Aorta (tissue), 5 donors: ENCODE measurements at regions of chr5 and their contacts with region 1.

Region 1: DNA sequence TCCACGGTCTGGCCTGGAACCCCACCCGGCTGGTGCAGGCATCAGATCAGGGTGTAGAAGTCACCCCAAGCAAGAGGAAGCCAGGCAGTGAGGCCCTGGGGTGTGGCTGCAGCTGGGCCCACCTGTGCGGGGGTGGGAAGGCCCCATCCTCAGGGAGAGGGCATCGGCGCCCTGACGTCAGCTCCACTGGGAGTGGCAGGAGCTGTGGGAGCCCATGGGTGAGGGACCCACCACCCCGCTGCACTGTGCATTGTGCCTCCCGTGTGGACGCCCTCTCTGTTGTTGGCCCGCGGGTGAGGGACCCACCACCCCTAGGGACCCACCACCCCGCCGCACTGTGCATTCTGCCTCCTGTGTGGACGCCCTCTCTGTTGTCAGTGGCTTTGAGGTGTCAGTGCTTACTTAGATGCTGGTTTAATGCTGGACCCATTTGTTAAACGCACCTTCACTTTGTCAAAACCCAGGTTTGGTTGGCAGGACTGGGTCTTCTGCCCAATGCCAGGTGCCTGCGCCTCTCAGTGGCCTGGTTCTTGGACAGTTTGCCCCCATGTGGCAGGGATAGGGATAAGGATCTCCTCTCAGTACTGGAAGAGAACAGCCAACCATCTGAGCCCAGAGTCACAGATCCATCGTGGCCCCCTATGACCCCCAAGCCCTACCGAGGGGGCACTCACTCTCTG is 6.9 kb upstream of the EXOC3 start:
- DNase-seq: peak; percentile 36 to 67
- ATAC-seq: no peak
- H3K4me3 ChIP-seq: no peak overlapping the region
- H3K27ac ChIP-seq: no peak overlapping the region
- H3K4me1 ChIP-seq: no peaks in the 10 kb centered on the region
- H3K27me3 ChIP-seq: no peaks in the 10 kb centered on the region

Region 2: DNA sequence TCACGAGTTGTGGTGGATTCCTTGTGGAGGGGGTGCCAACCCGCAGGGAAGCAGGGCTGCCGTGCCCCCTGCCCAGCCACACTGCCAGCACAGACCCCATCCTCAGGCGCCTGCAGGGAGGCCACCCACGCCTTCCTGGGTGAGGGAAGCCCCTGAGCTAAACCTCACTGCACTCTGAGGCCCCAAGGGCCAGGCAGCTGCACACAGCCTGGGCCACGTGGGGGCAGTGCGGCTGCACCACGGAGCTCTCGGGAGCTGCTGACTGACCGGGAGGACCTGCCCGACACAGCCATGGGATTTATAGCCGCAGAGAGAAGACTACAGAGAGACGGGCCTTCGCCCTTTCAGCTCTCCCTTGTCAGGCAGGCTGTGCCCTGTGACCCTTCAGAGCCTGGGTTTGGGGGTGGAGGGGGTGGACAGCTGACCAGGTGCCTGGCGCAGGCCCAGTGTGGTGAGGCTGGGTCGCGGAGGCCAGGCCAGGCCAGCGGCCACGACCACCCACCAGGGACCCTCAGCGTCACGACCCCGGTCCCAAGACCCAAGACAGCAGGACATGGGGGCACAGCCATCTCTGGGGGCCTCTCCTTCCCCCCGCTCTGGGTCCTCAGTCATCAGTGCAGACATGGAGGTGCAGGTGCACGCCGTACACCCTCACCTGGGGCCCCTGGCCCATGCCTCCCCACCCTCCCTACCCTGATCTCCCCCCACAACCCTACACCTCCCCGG is 118.9 kb before region 1 on chr5:
- intact Hi-C with region 1: loop called in 1 of 2 experiments (anchors 5 kb)
- DNase-seq: peak in 1 of 2 donors; percentile 61
- ATAC-seq: peak; percentile 6
- H3K4me3 ChIP-seq: no peak overlapping the region
- H3K27ac ChIP-seq: no peak overlapping the region
- H3K4me1 ChIP-seq: no peaks in the 10 kb centered on the region
- H3K27me3 ChIP-seq: no peaks in the 10 kb centered on the region

Region 3: DNA sequence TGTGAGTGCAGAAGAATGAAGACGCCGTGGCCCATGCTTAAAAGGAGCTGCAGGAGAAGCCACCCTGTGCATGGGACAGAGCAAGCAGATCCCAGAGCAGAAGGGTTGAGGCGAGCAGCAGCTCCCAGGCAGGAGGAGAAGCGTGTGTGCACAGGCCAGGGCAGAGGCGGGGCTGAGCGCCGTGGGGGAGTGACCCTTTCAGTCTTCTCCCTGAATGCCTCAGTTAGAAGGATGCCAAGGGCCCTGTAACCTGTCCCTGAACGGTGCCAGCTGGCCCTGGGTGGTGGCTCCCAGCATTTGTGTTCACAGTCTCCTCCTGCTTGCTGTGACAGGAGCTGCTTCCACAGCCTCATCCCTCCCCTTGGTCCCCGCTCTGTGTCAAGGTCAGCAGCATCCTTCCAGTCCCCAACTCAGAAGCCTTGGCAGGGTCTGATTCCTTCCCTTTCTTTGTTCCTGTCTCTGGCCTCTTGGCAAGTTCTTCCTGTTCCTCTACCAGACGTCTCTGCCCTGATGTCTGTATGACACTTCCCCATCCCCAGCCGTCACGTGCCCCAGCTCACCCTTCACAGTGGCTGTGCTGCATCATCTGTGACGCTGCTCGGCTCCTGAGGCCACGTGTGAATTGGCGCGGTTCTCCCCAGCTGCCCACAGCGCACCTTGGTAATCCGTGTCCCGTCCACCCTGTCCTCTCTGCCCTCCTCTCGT is 12.1 kb after region 1 on chr5:
- intact Hi-C with region 1: no loop called
- DNase-seq: peak; percentile 79 to 92
- ATAC-seq: peak; percentile 58
- H3K4me3 ChIP-seq: no peak overlapping the region
- H3K27ac ChIP-seq: no peak overlapping the region
- H3K4me1 ChIP-seq: no peaks in the 10 kb centered on the region
- H3K27me3 ChIP-seq: no peaks in the 10 kb centered on the region

Region 4: DNA sequence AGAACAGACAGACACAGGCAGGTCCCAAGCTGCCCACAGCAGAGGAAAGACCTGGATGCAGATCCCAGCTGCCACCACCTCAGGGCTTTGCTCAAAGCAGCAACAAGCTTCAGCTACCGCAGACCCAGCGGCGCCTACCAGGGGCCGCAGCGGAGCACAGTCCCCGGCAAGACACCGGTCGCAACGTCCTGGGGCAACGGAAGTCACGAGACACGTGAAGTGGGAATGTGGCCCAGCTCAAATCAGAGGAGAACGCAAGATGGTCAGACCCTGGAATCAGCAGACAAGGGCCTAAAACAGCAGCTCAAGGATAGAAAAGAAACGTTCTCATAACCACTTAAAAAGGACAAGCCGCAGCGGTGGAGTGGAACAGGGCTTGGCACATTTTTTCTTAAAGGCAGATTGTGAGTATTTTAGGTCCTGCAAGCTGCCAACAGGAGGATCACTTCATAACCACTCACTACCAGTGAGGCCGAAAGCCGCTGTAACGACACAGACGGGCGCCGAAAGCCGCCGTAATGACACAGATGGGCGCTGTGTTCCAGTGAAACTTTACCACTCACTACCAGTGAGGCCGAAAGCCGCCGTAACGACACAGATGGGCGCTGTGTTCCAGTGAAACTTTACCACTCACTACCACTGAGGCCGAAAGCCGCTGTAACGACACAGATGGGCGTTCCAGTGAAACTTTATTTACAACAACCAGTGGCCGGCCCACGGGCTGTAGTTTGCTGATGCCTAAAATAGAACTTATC is 66.4 kb after region 1 on chr5:
- intact Hi-C with region 1: no loop called
- DNase-seq: no peak
- ATAC-seq: no peak
- H3K4me3 ChIP-seq: no peak overlapping the region
- H3K27ac ChIP-seq: no peak overlapping the region
- H3K4me1 ChIP-seq: no peaks in the 10 kb centered on the region
- H3K27me3 ChIP-seq: no peaks in the 10 kb centered on the region